Mucosa of descending colon (tissue), 3 donors: ENCODE measurements at regions of chr16 and their contacts with region 1.

Region 1: DNA sequence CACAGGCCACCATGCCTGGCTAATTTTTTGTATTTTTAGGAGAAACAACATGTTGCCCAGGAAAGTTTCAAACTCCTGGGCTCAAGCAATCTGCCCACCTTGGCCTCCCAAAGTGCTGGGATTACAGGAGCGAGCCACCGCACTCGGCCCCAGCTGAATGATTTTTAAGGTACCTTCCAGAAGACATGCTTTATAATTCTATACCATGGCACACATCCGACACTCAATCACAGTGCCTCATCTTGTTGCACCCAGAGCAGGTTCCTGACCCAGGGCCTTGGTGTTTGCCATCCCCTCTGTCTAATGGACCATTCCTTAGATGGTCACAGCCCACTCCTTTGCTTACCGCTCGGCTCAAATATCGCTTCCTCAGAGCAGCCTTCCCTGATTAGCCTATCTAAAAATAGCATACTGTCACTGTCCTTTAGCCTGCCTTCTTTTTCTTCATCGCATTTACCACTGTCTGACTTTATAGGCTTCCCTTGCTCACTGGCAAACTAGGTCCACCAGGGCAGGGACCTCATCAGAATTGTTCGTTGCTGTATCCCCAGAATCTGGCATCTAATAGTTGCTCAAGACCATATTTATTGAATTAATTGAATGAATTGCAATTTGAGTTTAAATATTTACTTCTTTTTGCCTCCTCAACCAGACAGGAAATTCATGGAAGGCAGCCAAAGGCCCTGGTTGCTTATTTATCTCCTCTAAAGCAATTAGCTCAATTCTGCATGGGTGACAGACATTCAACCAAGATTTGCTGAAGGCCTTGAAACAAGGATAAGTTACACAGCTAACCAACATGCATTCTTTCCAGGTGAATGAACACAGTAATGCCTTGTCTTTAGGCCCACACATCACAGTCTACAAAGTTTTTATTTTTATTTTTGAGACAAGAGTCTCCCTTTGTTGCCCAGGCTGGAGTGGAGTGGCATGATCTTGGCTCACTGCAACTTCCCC is 6.3 kb upstream of the TENT4B start:
- DNase-seq: no peak
- ATAC-seq: no peak
- H3K4me3 ChIP-seq: no peak overlapping the region
- H3K4me1 ChIP-seq: no peaks in the 10 kb centered on the region
- CTCF ChIP-seq: no peak

Region 2: GRCh38 chr16:50079397-50080140 is 67.2 kb before region 1 on chr16:
- intact Hi-C with region 1: loop called in 1 of 2 experiments (anchors 10 kb)
- DNase-seq: no peak
- ATAC-seq: no peak
- H3K4me3 ChIP-seq: no peak overlapping the region
- H3K4me1 ChIP-seq: no peaks in the 10 kb centered on the region
- CTCF ChIP-seq: no peak